Activated naive CD4-positive, alpha-beta T cell treated with anti-CD3 and anti-CD28 coated beads for 36 hours (primary cell): ENCODE measurements at regions of chr14 and their contacts with region 1.

Region 1: GRCh38 chr14:103808403-103809001 is 38.9 kb downstream of the PPP1R13B start:
- DNase-seq: peak; percentile 80
- H3K4me3 Mint-ChIP-seq: no peak overlapping the region
- H3K27ac Mint-ChIP-seq: no peak overlapping the region
- H3K4me1 Mint-ChIP-seq: peaks cover 15% of the 10 kb centered on the region
- H3K27me3 Mint-ChIP-seq: no peaks in the 10 kb centered on the region

Region 2: DNA sequence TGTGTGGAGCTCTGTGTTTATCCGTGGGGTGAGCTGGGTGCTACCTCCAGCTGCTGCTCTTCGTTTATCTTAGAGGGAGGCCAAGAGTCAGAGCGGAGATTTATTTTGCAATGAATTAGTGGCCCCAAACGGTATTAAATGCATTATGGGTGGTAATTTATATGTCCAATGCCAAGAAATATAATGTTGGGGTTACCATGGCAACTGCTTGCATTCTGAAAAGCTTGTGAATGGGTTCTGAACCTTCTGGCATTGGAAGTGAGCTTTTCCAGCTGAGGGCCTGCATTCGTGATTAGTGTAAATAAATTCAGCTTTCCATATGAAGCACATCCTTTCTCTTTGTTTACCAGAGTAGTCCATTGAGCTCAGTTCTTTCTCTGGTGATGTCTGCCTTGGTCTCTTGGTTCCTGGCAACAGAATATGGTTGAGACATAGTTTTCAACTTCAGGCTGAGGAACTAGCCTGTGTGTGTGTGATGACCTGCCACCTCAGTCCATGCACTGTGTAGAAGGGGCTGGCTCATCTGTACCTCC is 979.4 kb before region 1 on chr14:
- CTCF ChIA-PET with region 1: no interaction called
- intact Hi-C with region 1: no loop called
- DNase-seq: no peak
- H3K4me3 Mint-ChIP-seq: no peak overlapping the region
- H3K27ac Mint-ChIP-seq: no peak overlapping the region
- H3K4me1 Mint-ChIP-seq: peaks cover 65% of the 10 kb centered on the region
- H3K27me3 Mint-ChIP-seq: no peaks in the 10 kb centered on the region

Region 3: GRCh38 chr14:103871596-103872480 is 63.3 kb after region 1 on chr14:
- CTCF ChIA-PET with region 1: interaction called, 8 read pairs
- intact Hi-C with region 1: loop called (anchors 2 kb)
- DNase-seq: peak; percentile 77
- H3K4me3 Mint-ChIP-seq: peak overlapping the region; percentile 77
- H3K27ac Mint-ChIP-seq: peak overlapping the region; percentile 54
- H3K4me1 Mint-ChIP-seq: peaks cover 8% of the 10 kb centered on the region
- H3K27me3 Mint-ChIP-seq: no peaks in the 10 kb centered on the region

Region 4: GRCh38 chr14:103899316-103899715 is 90.8 kb after region 1 on chr14:
- CTCF ChIA-PET with region 1: interaction called, 17 read pairs
- intact Hi-C with region 1: no loop called
- DNase-seq: no peak
- H3K4me3 Mint-ChIP-seq: no peak overlapping the region
- H3K27ac Mint-ChIP-seq: no peak overlapping the region
- H3K4me1 Mint-ChIP-seq: peaks cover 2% of the 10 kb centered on the region
- H3K27me3 Mint-ChIP-seq: no peaks in the 10 kb centered on the region

Region 5: GRCh38 chr14:103910262-103910935 is 101.9 kb after region 1 on chr14:
- CTCF ChIA-PET with region 1: interaction called, 27 read pairs
- intact Hi-C with region 1: loop called (anchors 1 kb)
- DNase-seq: peak; percentile 87
- H3K4me3 Mint-ChIP-seq: peak overlapping the region; percentile 25
- H3K27ac Mint-ChIP-seq: peak overlapping the region; percentile 84
- H3K4me1 Mint-ChIP-seq: peaks cover 24% of the 10 kb centered on the region
- H3K27me3 Mint-ChIP-seq: no peaks in the 10 kb centered on the region

Region 6: GRCh38 chr14:103984196-103984595 is 175.7 kb after region 1 on chr14:
- CTCF ChIA-PET with region 1: interaction called, 8 read pairs
- intact Hi-C with region 1: loop called (anchors 1 kb)
- DNase-seq: no peak
- H3K4me3 Mint-ChIP-seq: no peak overlapping the region
- H3K27ac Mint-ChIP-seq: no peak overlapping the region
- H3K4me1 Mint-ChIP-seq: no peaks in the 10 kb centered on the region
- H3K27me3 Mint-ChIP-seq: peaks cover 3% of the 10 kb centered on the region

Region 7: GRCh38 chr14:104001003-104001402 is 192.5 kb after region 1 on chr14:
- CTCF ChIA-PET with region 1: no interaction called
- intact Hi-C with region 1: loop called (anchors 5 kb)
- DNase-seq: peak; percentile 31
- H3K4me3 Mint-ChIP-seq: no peak overlapping the region
- H3K27ac Mint-ChIP-seq: no peak overlapping the region
- H3K4me1 Mint-ChIP-seq: no peaks in the 10 kb centered on the region
- H3K27me3 Mint-ChIP-seq: no peaks in the 10 kb centered on the region

Region 8: GRCh38 chr14:104078031-104078455 is 269.5 kb after region 1 on chr14:
- CTCF ChIA-PET with region 1: interaction called, 4 read pairs
- intact Hi-C with region 1: loop called (anchors 10 kb)
- DNase-seq: peak; percentile 94
- H3K4me3 Mint-ChIP-seq: no peak overlapping the region
- H3K27ac Mint-ChIP-seq: no peak overlapping the region
- H3K4me1 Mint-ChIP-seq: peaks cover 8% of the 10 kb centered on the region
- H3K27me3 Mint-ChIP-seq: peaks cover 5% of the 10 kb centered on the region